Colonic mucosa (tissue), 4 donors: ENCODE measurements at regions of chr2 and their contacts with region 1.

Region 1: DNA sequence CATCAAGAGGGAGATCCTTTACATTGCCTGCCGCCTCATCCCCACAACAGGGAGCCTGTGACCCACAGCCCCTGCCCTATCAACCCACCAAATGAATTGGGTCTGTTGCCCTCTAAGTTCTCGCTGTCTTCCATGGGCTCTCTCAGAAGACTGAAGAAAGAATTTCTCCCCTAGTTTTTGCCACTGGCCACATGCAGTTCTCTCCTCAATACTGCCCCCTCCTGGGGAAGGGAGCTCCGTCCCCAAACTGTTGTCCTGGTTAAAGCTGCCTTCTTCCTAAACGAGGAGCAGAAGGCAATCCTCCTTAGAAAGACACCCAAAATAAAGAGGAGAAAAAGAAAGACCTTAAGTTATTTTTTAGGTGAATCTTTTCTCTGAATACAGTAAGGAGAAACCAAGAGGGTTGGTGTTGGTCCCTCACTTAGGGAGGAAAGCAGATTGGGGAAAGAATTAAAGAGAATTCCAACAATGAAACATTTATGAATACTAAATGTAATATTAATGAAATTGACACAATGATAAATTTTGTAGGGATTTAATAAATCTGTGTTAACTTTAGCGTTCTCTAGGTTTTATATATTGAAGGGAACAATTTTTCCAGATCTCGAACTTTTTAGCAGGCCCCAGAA is 31.1 kb upstream of the SATB2 start:
- DNase-seq: peak; percentile 85
- H3K4me3 ChIP-seq: no peak overlapping the region
- H3K27ac ChIP-seq: no peak overlapping the region
- H3K4me1 ChIP-seq: no peaks in the 10 kb centered on the region
- H3K27me3 ChIP-seq: no peaks in the 10 kb centered on the region
- CTCF ChIP-seq: peak; percentile 75

Region 2: DNA sequence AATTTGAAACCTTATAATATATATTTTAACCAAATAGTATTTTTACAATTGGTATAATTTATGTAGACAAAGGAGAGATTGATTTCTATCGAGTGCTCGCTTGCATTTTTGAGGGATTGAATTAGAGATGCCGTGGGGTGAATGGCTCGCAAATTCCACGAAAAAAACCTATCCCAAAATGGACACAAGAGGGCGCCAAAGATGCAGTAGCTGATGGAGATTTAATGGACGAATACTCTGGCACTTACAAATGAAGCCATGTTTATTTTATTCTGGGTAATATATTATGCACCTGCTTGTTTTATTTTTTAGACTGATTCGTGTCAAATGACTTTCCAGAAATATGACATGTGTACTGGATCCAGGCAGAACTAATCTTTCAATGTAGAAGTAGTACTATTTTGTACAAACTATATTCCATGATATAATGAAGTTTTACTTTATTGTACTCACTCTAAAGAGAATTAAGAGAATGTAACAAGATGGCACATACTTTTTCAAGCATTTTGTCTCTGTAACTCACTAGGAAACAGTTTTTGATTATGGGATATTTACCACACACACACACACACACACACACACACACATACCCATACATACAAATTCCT is 1179.1 kb before region 1 on chr2:
- intact Hi-C with region 1: loop called (anchors 5 kb)
- DNase-seq: peak; percentile 82
- H3K4me3 ChIP-seq: no peak overlapping the region
- H3K27ac ChIP-seq: no peak overlapping the region
- H3K4me1 ChIP-seq: peaks cover 4% of the 10 kb centered on the region
- H3K27me3 ChIP-seq: no peaks in the 10 kb centered on the region
- CTCF ChIP-seq: peak; percentile 74

Region 3: DNA sequence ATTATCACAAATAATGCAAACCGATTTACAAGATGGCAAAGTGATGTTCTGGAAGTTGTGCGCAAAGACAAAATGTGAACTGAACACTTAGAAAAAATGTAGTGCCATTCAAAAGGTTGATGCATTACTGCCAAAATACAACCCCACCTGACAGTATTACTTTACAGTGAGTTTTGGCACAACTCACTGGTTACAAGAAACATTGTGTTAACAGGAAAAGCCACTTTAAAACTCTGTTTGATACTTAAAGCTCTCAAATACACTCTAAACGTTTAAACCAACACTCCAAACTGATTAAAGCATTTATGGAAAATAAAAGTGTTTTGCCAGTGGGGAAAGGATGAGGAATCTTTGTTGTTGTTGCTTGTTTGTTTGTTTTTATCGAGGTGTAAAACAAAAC is 142.2 kb after region 1 on chr2:
- intact Hi-C with region 1: no loop called
- DNase-seq: no peak
- H3K4me3 ChIP-seq: no peak overlapping the region
- H3K27ac ChIP-seq: no peak overlapping the region
- H3K4me1 ChIP-seq: no peaks in the 10 kb centered on the region
- H3K27me3 ChIP-seq: no peaks in the 10 kb centered on the region
- CTCF ChIP-seq: no peak